ENCODE measurements at regions of chr7 and their contacts with region 1.

Region 1: DNA sequence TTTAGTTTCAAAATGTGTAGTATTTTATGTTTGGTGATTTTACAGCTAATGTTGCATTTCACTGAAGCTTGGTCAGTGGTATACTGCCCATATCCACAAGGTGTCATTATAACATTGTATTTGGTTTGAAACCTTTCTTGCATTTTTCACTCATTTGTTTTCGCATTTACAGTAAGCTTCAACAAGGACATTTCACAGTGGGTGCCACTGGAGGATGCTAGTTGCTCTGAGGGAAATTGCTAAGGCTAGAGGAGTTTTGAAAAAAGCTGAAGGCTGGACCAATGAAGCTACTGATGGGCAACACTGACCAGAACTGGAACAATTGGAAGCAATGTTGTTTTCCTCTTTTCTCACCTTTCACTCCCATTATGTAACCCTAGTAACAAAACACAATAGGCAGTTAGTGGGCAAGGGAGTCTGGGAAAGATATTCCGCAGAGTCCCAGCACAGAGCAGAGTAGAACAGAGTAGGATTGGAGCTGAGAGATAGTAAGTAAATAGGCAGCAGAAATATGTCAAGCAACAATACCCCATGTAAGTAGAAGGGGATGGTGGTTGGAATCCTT is 23.6 kb upstream of the SRI start:
- DNase-seq: peak; percentile 57
- H3K4me3 Mint-ChIP-seq: no peak overlapping the region
- H3K27ac Mint-ChIP-seq: no peak overlapping the region
- H3K4me1 Mint-ChIP-seq: no peaks in the 10 kb centered on the region
- H3K27me3 Mint-ChIP-seq: no peaks in the 10 kb centered on the region
- CTCF ChIP-seq: peak; percentile 73

Region 2: DNA sequence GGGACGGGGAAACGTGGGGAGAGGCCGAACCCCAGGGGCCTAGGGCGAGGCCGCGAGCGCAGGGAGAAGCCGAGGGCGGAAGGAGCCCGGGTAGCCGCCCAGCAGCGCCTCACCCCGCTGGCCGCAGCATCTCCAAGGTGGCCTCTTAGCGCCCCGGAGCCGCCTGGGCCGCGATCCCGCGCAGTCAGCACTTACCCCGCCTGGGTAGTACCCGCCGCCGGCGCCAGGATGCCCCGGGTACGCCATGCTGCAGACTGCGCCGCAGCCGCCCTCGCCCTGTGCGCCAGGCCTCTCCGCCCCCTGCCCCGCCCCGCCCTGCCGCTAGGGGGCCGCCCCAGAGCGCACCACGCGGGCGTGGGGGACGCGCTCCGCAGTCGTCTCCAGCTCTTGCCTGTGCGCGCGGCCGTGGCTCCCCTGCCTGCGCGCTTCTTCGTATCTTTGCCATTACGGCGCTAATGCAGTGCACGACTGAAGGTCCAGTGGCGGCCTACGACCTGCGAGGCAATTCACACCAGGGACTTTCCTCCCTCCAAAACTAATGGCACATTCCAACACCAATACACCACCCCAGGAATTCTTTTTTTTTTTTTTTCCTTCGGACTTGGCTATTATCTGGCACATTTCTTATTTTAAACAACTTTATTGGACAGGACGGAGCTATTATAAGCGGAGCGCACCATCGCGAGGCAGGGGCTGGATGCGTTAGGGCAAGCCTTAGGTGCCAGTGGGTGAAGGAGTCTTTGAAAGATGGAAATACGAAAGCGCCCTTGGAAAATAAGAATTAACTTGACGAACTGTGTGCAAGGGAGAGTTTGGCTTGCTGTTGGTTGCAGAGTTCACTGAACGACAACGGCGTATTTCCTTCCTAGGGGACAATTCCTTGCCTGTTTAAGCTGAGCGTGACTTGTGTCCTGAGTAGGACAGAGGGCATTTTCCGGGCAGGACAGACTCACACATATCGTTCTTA is 23.4 kb before region 1 on chr7 and contains the start of gene SRI:
- CTCF ChIA-PET with region 1: interaction called, 12 read pairs
- POLR2A ChIA-PET with region 1: no interaction called
- intact Hi-C with region 1: no loop called
- DNase-seq: peak; percentile 79
- H3K4me3 Mint-ChIP-seq: peak within 1 kb of the TSS; percentile 84
- H3K27ac Mint-ChIP-seq: peak within 1 kb of the TSS; percentile 100
- H3K4me1 Mint-ChIP-seq: peaks cover 6% of the 10 kb centered on the region
- H3K27me3 Mint-ChIP-seq: no peaks in the 10 kb centered on the region
- CTCF ChIP-seq: peak; percentile 92
- total RNA-seq, gene SRI: 80.0 and 110 TPM in 2 replicates

Region 3: DNA sequence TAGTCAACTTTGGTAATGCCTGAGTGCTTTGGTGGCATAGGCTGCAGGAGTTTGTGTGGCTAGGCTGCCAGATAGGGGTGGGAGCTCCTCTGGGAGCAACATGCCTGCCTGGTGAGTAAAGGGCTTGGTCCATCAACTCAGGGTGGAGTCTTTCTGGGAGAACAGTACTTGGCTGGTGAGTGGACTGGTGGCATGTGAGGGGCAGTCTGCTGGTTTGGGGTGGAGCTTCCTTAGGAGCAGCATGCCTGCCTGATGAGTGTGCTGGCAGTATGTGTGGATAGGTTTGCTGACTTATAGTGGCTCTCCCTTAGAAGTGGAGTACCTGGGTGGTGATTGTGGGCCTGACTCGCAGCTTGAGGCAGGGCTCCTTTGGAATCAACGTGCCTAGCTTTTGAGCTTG is 11.3 kb after region 1 on chr7:
- CTCF ChIA-PET with region 1: interaction called, 30 read pairs
- POLR2A ChIA-PET with region 1: no interaction called
- intact Hi-C with region 1: no loop called
- DNase-seq: peak; percentile 84
- H3K4me3 Mint-ChIP-seq: no peak overlapping the region
- H3K27ac Mint-ChIP-seq: peak overlapping the region; percentile 50
- H3K4me1 Mint-ChIP-seq: peaks cover 44% of the 10 kb centered on the region
- H3K27me3 Mint-ChIP-seq: no peaks in the 10 kb centered on the region
- CTCF ChIP-seq: no peak

Region 4: DNA sequence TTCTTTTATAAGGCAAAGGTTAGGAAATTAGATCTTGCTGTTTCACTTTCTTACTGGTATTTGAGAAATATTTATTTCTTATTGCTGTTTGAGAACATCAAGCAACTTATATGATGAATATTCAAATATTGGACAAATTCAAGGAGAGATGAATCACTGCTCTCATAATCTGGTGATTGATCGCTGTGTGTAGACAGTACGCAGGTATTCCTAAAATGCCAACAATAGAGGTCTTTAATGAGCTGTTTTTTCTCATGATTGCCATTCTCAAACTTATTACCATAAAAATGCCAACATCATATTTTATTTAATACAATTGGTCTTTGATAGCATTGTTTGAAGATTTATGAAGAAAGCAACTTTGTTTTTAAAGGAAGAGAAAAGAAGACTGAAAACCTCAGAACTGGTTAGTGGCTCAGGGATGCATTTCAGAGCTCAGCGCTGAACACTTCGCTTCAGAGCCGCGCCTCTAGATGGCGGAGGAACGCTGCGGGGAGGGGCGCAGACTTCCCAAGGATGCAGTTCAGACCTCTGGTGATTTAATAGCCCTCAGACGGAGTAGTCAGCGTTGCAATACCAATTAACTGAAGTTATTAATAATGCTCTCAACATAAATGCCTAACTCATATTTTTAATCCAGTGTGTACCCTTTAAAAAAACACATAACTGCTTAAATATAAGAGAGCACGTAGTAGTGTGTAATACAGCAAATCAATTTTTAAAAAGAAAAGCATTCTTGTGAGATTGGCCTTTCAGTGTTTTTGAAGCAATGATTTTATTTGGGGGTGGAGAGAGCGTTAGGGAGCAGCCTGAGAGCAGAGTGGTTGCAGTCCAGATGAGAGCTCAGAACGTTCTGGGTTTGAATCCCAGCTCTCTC is 101.8 kb after region 1 on chr7:
- CTCF ChIA-PET with region 1: interaction called, 18 read pairs
- POLR2A ChIA-PET with region 1: no interaction called
- intact Hi-C with region 1: no loop called
- DNase-seq: peak; percentile 12
- H3K4me3 Mint-ChIP-seq: no peak overlapping the region
- H3K27ac Mint-ChIP-seq: no peak overlapping the region
- H3K4me1 Mint-ChIP-seq: no peaks in the 10 kb centered on the region
- H3K27me3 Mint-ChIP-seq: no peaks in the 10 kb centered on the region
- CTCF ChIP-seq: no peak

Region 5: DNA sequence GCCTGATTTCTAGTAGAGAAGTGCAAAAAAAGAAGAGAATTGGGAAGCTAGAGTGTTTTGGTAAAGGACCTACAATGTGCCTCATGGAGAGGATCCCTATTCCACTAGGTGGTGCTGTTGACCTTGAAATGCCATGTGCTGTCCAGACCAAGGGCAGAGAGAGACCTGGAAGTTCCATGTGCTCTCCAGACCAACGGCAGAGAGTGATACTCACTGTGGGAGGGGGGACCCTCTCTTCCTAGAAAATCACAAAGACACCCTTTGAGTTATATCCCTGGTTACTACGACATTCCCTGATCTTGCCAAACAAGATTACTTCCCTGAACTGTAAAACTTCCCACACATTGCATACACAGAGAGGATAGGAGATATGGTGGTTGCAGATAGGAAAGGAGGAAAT is 303.4 kb after region 1 on chr7:
- CTCF ChIA-PET with region 1: no interaction called
- POLR2A ChIA-PET with region 1: no interaction called
- intact Hi-C with region 1: loop called (anchors 10 kb)
- DNase-seq: peak; percentile 63
- H3K4me3 Mint-ChIP-seq: no peak overlapping the region
- H3K27ac Mint-ChIP-seq: no peak overlapping the region
- H3K4me1 Mint-ChIP-seq: no peaks in the 10 kb centered on the region
- H3K27me3 Mint-ChIP-seq: no peaks in the 10 kb centered on the region
- CTCF ChIP-seq: peak; percentile 65

Region 6: GRCh38 chr7:88910516-88910915 is 667.1 kb after region 1 on chr7:
- CTCF ChIA-PET with region 1: no interaction called
- POLR2A ChIA-PET with region 1: no interaction called
- intact Hi-C with region 1: no loop called
- DNase-seq: no peak
- H3K4me3 Mint-ChIP-seq: no peak overlapping the region
- H3K27ac Mint-ChIP-seq: no peak overlapping the region
- H3K4me1 Mint-ChIP-seq: no peaks in the 10 kb centered on the region
- H3K27me3 Mint-ChIP-seq: peaks cover 11% of the 10 kb centered on the region
- CTCF ChIP-seq: no peak

Region 7: DNA sequence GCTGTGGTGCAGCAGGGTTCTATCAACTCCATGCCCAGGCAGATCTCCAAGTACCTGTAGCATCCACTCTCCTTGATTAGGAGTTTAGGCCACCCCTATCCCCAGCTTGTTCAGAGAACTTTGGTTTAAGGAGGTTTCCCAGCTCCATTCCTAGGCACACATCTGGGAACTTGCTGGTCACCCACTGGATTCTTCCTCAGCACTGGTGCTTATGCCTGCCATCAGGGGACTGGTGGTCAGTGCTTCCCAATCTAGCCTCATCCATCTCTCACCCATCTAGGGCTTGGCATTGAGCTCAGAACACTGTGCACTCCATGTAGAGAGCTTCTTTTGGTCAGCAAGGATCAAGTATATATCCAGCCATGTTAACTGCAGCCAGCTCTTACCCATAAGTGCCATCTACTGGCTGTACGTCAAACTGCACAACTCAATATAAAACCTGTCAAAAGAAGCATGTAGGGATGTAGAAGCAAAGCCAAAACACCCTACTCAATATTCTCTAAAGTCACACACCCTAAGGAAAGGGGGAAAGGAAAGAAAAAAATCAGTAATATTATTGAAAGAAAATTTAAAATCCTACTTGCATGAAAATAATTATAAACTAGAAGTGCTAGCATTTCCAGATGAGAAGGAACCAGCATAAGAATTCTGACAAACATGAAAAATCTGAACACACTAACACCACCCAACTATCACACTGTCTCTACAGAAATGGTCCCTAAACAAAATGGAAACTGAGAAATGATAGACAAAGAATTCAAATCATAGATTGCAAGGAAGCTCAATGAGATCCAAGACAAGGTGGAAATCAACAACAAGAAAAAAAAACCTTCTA is 1379.6 kb after region 1 on chr7:
- CTCF ChIA-PET with region 1: interaction called, 4 read pairs
- POLR2A ChIA-PET with region 1: no interaction called
- intact Hi-C with region 1: loop called (anchors 5 kb)
- DNase-seq: peak; percentile 56
- H3K4me3 Mint-ChIP-seq: no peak overlapping the region
- H3K27ac Mint-ChIP-seq: no peak overlapping the region
- H3K4me1 Mint-ChIP-seq: no peaks in the 10 kb centered on the region
- H3K27me3 Mint-ChIP-seq: peaks cover 51% of the 10 kb centered on the region
- CTCF ChIP-seq: peak; percentile 62

Measured in MCF 10A (cell line).